ENCODE measurements at regions of chr6 and their contacts with region 1.

Region 1: GRCh38 chr6:79570129-79571029 is 33.1 kb upstream of the LCA5 start:
- DNase-seq: peak in 1 of 3 donors; percentile 27
- ATAC-seq: peak; percentile 87 to 94 (median 88)
- H3K4me3 ChIP-seq: peak overlapping the region; percentile 16 to 50 (median 38)
- H3K27ac ChIP-seq: no peak overlapping the region
- H3K4me1 ChIP-seq: peaks cover 0 to 6% (median 3%) of the 10 kb centered on the region in 4 donors
- H3K27me3 ChIP-seq: no peaks in the 10 kb centered on the region
- CTCF ChIP-seq: peak; percentile 74 to 80 (median 77)
- POLR2A ChIP-seq: no peak

Region 2: GRCh38 chr6:79413562-79414002 is 156.8 kb before region 1 on chr6:
- intact Hi-C with region 1: no loop called
- DNase-seq: no peak
- ATAC-seq: no peak
- H3K4me3 ChIP-seq: no peak overlapping the region
- H3K27ac ChIP-seq: no peak overlapping the region
- H3K4me1 ChIP-seq: no peaks in the 10 kb centered on the region
- H3K27me3 ChIP-seq: no peaks in the 10 kb centered on the region
- CTCF ChIP-seq: no peak
- POLR2A ChIP-seq: no peak

Region 3: GRCh38 chr6:79713701-79714322 is 143.4 kb after region 1 on chr6:
- intact Hi-C with region 1: loop called in 1 of 2 experiments (anchors 10 kb)
- DNase-seq: peak in 2 of 3 donors; percentile 32 to 56
- ATAC-seq: peak; percentile 73 to 87 (median 82)
- H3K4me3 ChIP-seq: no peak overlapping the region
- H3K27ac ChIP-seq: no peak overlapping the region
- H3K4me1 ChIP-seq: no peaks in the 10 kb centered on the region
- H3K27me3 ChIP-seq: no peaks in the 10 kb centered on the region
- CTCF ChIP-seq: peak; percentile 59 to 82 (median 77)
- POLR2A ChIP-seq: no peak